Activated CD8-positive, alpha-beta T cell treated with anti-CD3 and anti-CD28 coated beads, Interleukin-2, amount 10 ng/mL, durations not matched to agents 7 days and 5 days (primary cell): ENCODE measurements at regions of chr14 and their contacts with region 1.

Region 1: DNA sequence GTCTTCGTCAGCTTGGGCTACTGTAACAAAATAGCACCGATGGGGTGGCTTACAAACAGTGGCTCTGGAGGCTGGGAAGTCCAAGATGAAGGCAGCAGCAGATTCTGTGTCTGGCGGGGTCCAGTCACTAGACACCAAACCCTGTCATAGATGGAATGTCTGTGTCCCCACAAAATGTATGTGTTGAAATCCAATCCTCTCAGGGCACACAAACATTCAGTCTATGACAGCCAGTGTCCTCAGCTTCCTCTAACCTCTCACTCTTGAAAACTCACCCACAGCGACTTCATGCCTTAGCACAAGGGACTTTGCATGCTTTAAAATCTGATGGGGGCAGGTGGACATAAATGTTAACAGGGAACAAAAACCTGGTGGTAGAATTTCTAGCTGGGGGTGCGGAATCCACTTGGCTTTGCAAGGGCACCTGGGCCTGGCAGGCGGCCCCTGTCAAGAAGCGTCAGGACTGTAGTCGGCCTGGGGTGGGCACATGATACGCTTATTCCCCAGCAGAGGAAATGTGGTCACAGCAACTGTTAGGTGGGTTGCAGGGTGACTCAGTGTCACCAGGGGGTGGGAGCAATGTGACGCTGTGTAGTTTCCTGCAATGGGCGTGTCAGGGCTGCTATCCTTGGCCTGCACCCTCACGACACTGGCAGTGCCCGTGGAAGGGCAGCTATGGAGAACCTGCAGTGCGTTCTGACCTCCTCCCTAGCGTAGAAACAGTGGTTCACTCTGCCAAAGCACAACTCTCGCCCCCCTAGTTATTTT is 17.7 kb downstream of the RIN3 start:
- DNase-seq: peak; percentile 93
- ATAC-seq: peak; percentile 89
- H3K4me3 Mint-ChIP-seq: peak overlapping the region; percentile 70
- H3K27ac Mint-ChIP-seq: peak overlapping the region; percentile 99
- H3K4me1 Mint-ChIP-seq: peaks cover 87% of the 10 kb centered on the region
- H3K27me3 Mint-ChIP-seq: no peaks in the 10 kb centered on the region

Region 2: DNA sequence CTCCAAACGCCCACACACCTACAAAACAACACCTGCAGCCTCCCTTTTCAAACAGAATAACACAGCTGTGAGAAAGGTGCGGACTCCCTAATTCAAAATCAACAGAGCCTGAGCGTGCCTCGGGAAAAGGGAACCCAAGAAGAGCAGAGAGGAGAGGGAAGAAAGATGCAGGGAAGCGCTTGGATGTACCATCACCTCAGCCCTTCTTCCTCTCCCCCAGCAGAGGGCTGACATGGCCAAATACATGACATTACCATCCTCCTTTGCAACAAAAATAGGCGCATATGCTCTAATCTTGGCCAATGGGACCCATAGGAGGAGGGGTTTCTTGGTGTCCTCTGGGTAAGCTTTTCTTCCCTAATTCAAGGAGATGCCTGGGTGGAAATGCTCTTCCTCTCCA is 331.5 kb before region 1 on chr14:
- CTCF ChIA-PET with region 1: no interaction called
- POLR2A ChIA-PET with region 1: no interaction called
- DNase-seq: no peak
- ATAC-seq: no peak
- H3K4me3 Mint-ChIP-seq: no peak overlapping the region
- H3K27ac Mint-ChIP-seq: no peak overlapping the region
- H3K4me1 Mint-ChIP-seq: no peaks in the 10 kb centered on the region
- H3K27me3 Mint-ChIP-seq: peaks cover 25% of the 10 kb centered on the region

Region 3: DNA sequence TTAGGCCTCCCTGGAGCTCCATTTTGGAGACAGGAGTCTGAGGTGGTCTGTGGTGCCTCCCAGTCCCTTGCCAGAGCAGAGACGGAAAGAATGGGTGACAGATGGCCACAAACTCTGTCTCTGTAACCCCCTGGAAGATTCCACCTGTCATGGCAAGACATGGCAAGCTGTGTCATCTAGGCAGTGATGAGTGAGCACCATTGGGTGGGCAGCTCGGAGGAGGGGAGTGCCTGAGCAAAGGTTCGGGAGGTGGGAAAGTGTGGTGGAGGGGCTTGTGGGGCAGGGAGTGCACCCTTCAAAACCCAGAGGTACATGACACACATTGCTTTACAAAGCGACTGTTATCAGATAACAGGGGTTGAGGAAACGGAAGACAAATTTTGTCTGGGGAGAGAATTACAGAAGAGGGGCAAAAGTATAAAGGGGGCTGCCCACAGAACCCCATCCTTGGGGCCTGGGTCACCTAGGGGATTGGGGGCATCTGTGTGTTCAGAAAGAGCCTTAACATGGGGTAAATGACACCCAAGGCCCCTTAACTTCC is 14.3 kb before region 1 on chr14:
- CTCF ChIA-PET with region 1: interaction called, 10 read pairs
- POLR2A ChIA-PET with region 1: interaction called, 7 read pairs
- DNase-seq: peak; percentile 40
- ATAC-seq: peak; percentile 36
- H3K4me3 Mint-ChIP-seq: peak overlapping the region; percentile 77
- H3K27ac Mint-ChIP-seq: peak overlapping the region; percentile 93
- H3K4me1 Mint-ChIP-seq: peaks cover 83% of the 10 kb centered on the region
- H3K27me3 Mint-ChIP-seq: no peaks in the 10 kb centered on the region